ENCODE measurements at regions of chr4 and their contacts with region 1.

Region 1: DNA sequence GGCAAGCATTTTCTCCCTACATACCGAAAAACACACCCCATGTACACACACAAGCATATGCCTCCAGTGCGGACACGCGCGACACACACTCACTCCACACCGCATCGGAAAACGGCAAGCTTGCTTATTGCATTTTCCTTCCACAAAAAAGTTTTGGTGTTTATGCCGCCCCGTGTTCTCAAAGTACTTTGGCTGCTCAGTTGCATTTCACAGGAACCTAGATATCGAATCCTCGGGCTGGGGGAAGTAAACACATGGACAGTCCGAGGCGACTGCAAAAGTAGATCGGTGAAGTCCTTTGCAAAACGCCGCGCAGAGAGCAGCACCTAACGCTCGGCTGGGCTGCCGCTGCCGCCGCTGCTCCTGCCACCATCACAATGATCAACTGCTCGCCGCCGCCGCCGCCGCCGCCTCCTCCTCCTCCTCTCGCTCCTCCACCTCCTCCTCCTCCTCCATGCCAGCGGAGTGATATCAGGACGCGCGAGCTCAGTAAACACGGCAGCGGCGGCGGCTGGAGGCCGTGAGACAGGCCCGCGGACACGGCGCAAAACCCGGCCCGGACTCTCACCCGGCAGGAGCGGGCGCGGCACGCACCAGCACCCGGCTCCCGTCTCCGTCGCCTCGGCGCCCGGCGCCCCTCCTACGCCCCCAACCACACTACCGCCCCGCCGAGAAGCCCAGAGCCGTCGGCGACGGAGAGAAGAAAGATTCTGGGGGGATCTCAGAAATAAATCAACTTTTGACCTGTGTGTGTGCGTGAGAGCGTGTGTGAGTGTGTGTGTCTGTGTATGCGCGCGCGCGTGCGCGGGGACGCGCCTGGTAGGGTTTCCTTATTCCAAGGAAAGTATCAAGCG is at the start of gene MAML3:
- DNase-seq: peak; percentile 96
- H3K4me3 ChIP-seq: peak within 1 kb of the TSS; percentile 73 to 96
- H3K27ac ChIP-seq: peak within 1 kb of the TSS; percentile 93 to 98
- H3K4me1 ChIP-seq: peaks cover 9% of the 10 kb centered on the region
- H3K27me3 ChIP-seq: no peaks in the 10 kb centered on the region
- CTCF ChIP-seq: no peak
- POLR2A ChIP-seq: peak; percentile 3
- total RNA-seq, gene MAML3: 18.8 to 21.2 TPM

Region 2: DNA sequence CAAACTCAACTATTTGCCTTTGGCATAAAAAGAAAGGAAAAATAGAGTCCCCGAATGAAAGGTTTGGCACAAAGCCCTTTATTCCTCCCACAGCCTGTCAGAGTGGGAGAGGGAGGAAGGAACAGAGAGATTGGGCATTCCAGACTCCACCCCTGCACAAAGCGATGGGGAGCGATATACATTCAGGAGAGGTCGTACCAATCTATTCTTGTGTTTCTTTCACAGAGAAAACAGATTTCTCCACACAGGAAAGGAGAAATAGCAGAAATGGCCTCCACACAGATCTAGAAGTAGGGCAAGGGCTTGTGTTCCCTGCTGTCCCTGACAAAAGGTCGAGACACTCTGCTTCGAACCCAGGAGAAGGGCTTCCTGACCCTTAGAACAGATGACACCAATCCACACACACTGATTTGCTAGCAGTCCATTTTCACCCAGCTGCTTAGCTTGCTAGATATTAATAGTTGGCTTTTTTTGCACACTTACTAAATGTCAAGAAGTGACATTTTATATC is 197.4 kb before region 1 on chr4:
- intact Hi-C with region 1: loop called (anchors 5 kb)
- DNase-seq: peak; percentile 34
- H3K4me3 ChIP-seq: no peak overlapping the region
- H3K27ac ChIP-seq: peak overlapping the region; percentile 15 to 50
- H3K4me1 ChIP-seq: peaks cover 27% of the 10 kb centered on the region
- H3K27me3 ChIP-seq: no peaks in the 10 kb centered on the region
- CTCF ChIP-seq: no peak
- POLR2A ChIP-seq: no peak

Region 3: DNA sequence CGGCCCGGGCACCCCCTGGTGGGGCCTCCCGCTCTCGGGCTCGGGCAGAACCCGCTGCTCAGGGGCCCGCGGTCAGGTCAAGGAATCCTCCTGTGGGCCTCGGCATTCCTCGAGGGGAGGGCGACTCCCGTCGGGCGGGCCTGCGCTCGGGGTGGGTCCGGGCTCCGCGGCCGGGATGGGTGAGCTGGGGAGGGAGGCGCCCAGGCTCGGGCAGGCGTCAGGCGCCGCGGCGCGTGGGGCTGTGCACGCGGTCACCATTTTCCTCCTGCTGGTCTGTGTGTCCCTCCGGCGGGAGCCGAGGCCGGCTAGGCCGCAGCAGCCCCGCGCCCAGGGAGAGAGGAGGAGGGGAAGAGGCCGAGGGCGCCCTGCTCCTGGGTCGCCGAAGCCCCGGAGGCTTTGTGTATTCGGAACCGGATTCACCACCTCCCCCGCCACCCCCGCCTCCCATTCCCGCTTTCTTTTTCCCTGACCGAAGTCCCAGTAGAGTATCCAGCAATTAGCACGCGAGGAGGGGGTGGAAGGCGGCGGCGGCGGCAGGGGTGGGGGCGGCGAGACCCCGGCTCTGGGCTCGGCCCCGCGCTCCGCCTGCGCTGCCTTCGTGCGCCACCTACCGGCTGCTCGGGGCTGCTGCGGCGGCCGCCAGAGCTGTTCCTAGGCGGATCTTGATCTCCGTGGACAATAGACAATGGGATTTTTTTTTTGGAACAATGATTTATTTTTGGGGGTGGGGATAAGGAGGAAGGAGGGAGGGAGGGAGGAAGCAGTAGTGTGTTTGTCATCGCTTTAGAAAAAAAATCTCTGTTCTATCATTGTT is 99.0 kb after region 1 on chr4:
- intact Hi-C with region 1: loop called (anchors 5 kb)
- DNase-seq: peak; percentile 85
- H3K4me3 ChIP-seq: peak overlapping the region; percentile 63 to 85
- H3K27ac ChIP-seq: peak overlapping the region; percentile 91 to 92
- H3K4me1 ChIP-seq: peaks cover 18% of the 10 kb centered on the region
- H3K27me3 ChIP-seq: no peaks in the 10 kb centered on the region
- CTCF ChIP-seq: peak; percentile 82 to 99 (median 91)
- POLR2A ChIP-seq: no peak

Measured in testis (tissue), 5 donors.